ENCODE measurements at regions of chr6 and their contacts with region 1.

Region 1: GRCh38 chr6:47787620-47788497 is 6.0 kb downstream of the OPN5 start:
- DNase-seq: peak; percentile 98
- H3K4me3 ChIP-seq: no peak overlapping the region
- H3K27ac ChIP-seq: peak overlapping the region; percentile 94
- H3K4me1 ChIP-seq: peaks cover 19% of the 10 kb centered on the region
- H3K27me3 ChIP-seq: no peaks in the 10 kb centered on the region
- CTCF ChIP-seq: peak; percentile 88 to 93

Region 2: DNA sequence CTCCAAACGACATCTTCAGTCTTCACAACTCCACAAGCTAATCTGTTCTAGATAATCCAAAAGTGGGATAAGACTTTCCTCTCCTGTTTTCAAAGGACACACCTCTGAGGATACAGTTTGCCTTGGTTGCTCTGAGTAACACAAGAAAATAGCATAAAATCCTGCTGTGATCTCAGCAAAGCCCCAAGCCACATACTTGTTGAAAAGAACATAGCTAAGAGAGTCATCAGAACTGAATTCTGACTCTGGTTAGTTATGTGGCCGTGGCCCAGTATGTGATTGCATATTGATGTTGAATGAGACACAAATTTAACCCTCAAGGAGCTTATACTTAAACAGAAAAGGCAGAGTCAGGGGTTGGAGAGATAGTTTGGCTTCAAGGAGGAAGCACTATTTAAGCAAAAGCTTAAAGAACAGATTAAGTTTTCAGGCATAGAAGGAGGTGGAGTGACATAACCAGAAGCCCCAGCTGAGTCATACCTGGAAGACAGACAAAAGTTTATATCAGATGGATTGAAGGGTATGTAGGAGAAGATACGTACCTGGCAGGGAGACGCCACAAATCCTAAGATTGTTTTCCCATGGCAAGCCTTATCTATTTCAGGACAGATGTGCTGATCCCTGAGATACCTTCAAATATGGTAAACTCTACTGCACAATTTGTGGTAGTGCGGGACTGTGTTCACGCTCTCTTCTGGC is 35.1 kb after region 1 on chr6:
- CTCF ChIA-PET with region 1: no interaction called
- dilution Hi-C with region 1: no loop called
- in situ Hi-C with region 1: no loop called
- intact Hi-C with region 1: no loop called
- DNase-seq: no peak
- H3K4me3 ChIP-seq: no peak overlapping the region
- H3K27ac ChIP-seq: no peak overlapping the region
- H3K4me1 ChIP-seq: no peaks in the 10 kb centered on the region
- H3K27me3 ChIP-seq: no peaks in the 10 kb centered on the region
- CTCF ChIP-seq: no peak

Region 3: GRCh38 chr6:48378884-48379407 is 591.1 kb after region 1 on chr6:
- CTCF ChIA-PET with region 1: no interaction called
- dilution Hi-C with region 1: no loop called
- in situ Hi-C with region 1: no loop called
- intact Hi-C with region 1: loop called (anchors 5 kb)
- DNase-seq: no peak
- H3K4me3 ChIP-seq: no peak overlapping the region
- H3K27ac ChIP-seq: no peak overlapping the region
- H3K4me1 ChIP-seq: no peaks in the 10 kb centered on the region
- H3K27me3 ChIP-seq: no peaks in the 10 kb centered on the region
- CTCF ChIP-seq: no peak

Region 4: DNA sequence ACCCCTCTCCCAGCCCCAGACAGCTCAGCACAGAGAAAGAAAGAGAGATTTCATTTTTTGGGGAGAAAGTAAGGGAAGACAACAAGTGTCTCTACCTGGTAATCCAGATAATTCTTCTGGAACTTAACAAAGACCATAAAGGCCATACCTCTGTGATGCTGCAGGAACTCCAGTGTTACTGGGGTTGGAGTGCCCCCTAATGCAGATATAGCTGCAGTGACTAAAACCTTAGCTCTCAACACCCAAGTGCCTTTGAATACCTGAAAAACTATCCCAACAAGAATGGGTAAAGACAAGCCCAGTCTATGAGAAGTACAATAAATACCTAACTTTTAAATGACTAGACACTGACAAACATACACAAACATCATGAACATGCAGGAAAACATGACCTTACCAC is 688.4 kb after region 1 on chr6:
- CTCF ChIA-PET with region 1: interaction called, 13 read pairs
- dilution Hi-C with region 1: no loop called
- in situ Hi-C with region 1: no loop called
- intact Hi-C with region 1: loop called (anchors 1 kb)
- DNase-seq: peak; percentile 40
- H3K4me3 ChIP-seq: no peak overlapping the region
- H3K27ac ChIP-seq: no peak overlapping the region
- H3K4me1 ChIP-seq: peaks cover 16% of the 10 kb centered on the region
- H3K27me3 ChIP-seq: no peaks in the 10 kb centered on the region
- CTCF ChIP-seq: peak; percentile 47 to 60

Region 5: DNA sequence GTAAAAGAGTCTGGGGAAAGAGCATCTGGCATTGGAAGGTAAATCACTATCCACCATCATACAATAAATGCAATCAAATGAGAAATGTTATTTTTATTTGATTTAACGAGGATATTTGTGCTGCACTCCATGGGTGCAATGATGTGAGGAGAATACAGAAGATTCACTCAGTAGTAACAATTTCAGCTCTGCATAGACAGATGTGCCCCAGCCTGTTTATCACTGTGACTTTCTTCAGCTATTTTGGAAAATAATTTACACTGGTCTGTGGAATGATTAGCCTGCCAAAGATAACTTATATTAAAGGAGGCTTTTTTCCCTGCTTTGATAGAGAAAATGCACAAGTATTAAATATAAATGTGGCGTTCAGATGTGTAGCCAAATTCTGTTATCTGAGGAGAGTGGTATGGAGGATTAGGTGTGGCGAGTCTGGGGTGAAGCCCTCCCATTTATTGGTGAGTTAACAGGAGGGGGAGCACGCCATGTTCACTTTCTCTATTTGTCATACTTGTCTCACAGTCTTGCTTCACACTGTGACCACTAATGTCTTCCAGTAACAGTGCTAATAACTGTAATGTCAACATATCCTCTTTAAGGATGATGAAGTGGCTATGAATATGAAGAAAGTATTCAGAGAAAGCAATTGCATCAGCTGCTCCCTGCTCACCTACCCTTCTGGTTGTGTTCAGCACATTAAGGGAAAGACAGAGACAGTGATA is 1029.6 kb after region 1 on chr6:
- CTCF ChIA-PET with region 1: no interaction called
- dilution Hi-C with region 1: no loop called
- in situ Hi-C with region 1: no loop called
- intact Hi-C with region 1: loop called (anchors 1 kb)
- DNase-seq: peak; percentile 71
- H3K4me3 ChIP-seq: no peak overlapping the region
- H3K27ac ChIP-seq: peak overlapping the region; percentile 78
- H3K4me1 ChIP-seq: peaks cover 15% of the 10 kb centered on the region
- H3K27me3 ChIP-seq: no peaks in the 10 kb centered on the region
- CTCF ChIP-seq: no peak

Region 6: GRCh38 chr6:49052901-49053300 is 1265.0 kb after region 1 on chr6:
- CTCF ChIA-PET with region 1: no interaction called
- dilution Hi-C with region 1: no loop called
- in situ Hi-C with region 1: no loop called
- intact Hi-C with region 1: loop called (anchors 10 kb)
- DNase-seq: peak; percentile 68
- H3K4me3 ChIP-seq: no peak overlapping the region
- H3K27ac ChIP-seq: peak overlapping the region; percentile 81
- H3K4me1 ChIP-seq: peaks cover 15% of the 10 kb centered on the region
- H3K27me3 ChIP-seq: no peaks in the 10 kb centered on the region
- CTCF ChIP-seq: no peak

Region 7: GRCh38 chr6:49453221-49453620 is 1665.4 kb after region 1 on chr6:
- CTCF ChIA-PET with region 1: interaction called, 10 read pairs
- dilution Hi-C with region 1: no loop called
- in situ Hi-C with region 1: no loop called
- intact Hi-C with region 1: no loop called
- DNase-seq: no peak
- H3K4me3 ChIP-seq: no peak overlapping the region
- H3K27ac ChIP-seq: no peak overlapping the region
- H3K4me1 ChIP-seq: no peaks in the 10 kb centered on the region
- H3K27me3 ChIP-seq: no peaks in the 10 kb centered on the region
- CTCF ChIP-seq: peak; percentile 3 to 30

Region 8: DNA sequence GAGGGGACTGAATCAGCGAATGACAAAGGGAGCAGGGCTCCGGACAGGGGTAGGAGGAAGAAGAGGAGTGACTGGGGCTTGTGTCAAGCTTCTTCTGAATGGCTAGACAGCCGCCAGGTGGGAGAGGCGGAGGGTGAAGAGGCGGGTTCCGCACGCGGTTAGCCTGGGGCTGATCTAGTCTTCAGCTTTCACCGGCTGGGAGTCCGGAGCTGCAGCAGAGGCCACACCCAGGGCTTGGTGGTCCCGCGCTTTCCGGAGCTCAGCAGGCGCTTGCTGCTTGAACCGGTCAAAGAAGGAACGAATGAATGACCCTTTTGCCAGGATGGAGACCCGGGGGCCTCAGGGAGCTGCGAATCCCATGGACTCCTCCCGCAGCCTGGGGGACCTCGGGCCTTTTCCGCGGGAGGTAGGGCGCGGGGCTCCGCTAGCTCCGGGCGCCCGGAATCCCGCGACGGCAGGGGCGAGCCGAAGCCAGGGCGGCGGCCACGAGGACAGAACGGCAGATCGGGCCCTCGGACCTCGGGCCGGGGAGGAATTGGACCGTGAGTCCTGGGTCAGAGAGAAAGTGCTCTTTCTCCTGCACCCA is 1762.7 kb after region 1 on chr6 and contains the start of gene C6orf141:
- CTCF ChIA-PET with region 1: no interaction called
- dilution Hi-C with region 1: no loop called
- in situ Hi-C with region 1: no loop called
- intact Hi-C with region 1: loop called (anchors 5 kb)
- DNase-seq: peak; percentile 85
- H3K4me3 ChIP-seq: peak within 1 kb of the TSS; percentile 88 to 93 (median 89)
- H3K27ac ChIP-seq: peak within 1 kb of the TSS; percentile 69
- H3K4me1 ChIP-seq: peaks cover 11% of the 10 kb centered on the region
- H3K27me3 ChIP-seq: no peaks in the 10 kb centered on the region
- CTCF ChIP-seq: peak in 1 of 2 donors; percentile 13
- total RNA-seq, gene C6orf141: 22.7 to 39.8 TPM

Measured in mammary epithelial cell (primary cell).